ENCODE measurements at regions of chr7 and their contacts with region 1.

Region 1: GRCh38 chr7:80392229-80393169 is 119.4 kb downstream of the GNAT3 start:
- DNase-seq: peak in 2 of 14 experiments; percentile 8 to 10
- ATAC-seq: no peak
- H3K4me3 ChIP-seq: no peak overlapping the region
- H3K4me3 Mint-ChIP-seq: no peak overlapping the region
- H3K27ac ChIP-seq: no peak overlapping the region
- H3K27ac Mint-ChIP-seq: no peak overlapping the region
- H3K4me1 ChIP-seq: no peaks in the 10 kb centered on the region
- H3K4me1 Mint-ChIP-seq: no peaks in the 10 kb centered on the region
- H3K27me3 ChIP-seq: no peaks in the 10 kb centered on the region
- H3K27me3 Mint-ChIP-seq: no peaks in the 10 kb centered on the region
- CTCF ChIP-seq: peak; percentile 38

Region 2: GRCh38 chr7:79420464-79420863 is 972.0 kb before region 1 on chr7:
- CTCF ChIA-PET with region 1: no interaction called
- POLR2A ChIA-PET with region 1: no interaction called
- intact Hi-C with region 1: no loop called
- DNase-seq: no peak
- ATAC-seq: no peak
- H3K4me3 ChIP-seq: no peak overlapping the region
- H3K4me3 Mint-ChIP-seq: no peak overlapping the region
- H3K27ac ChIP-seq: no peak overlapping the region
- H3K27ac Mint-ChIP-seq: no peak overlapping the region
- H3K4me1 ChIP-seq: no peaks in the 10 kb centered on the region
- H3K4me1 Mint-ChIP-seq: no peaks in the 10 kb centered on the region
- H3K27me3 ChIP-seq: no peaks in the 10 kb centered on the region
- H3K27me3 Mint-ChIP-seq: no peaks in the 10 kb centered on the region
- CTCF ChIP-seq: no peak

Region 3: DNA sequence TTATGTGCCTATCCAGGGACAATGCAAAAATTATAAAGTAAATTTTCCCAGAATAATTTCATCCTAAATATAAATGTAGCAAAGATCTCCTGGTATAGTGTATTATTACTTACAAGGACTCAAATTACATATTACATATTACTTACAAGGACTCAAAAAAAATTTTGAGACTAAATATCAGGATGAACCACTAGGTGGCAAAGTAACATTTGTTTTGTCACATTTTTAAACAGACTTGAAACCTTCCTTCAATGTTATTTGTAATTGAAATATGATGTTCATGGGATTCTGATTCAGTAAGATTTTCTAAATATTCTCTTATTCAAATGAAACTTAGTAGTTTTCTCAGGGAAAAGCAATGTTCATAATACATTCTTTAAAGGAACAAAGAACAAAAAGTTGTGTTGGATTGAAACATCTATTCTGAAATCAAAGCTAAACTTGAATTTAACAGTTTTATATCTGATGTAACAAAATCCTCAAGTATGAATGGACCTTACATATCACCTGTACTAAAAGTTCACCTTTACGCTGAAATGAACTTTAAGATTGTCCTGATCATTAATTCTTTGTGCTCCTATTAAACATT is 332.2 kb before region 1 on chr7:
- CTCF ChIA-PET with region 1: no interaction called
- POLR2A ChIA-PET with region 1: no interaction called
- intact Hi-C with region 1: loop called in 1 of 2 experiments (anchors 2 kb)
- DNase-seq: peak in 2 of 14 experiments; percentile 20 to 22
- ATAC-seq: no peak
- H3K4me3 ChIP-seq: no peak overlapping the region
- H3K4me3 Mint-ChIP-seq: no peak overlapping the region
- H3K27ac ChIP-seq: no peak overlapping the region
- H3K27ac Mint-ChIP-seq: no peak overlapping the region
- H3K4me1 ChIP-seq: no peaks in the 10 kb centered on the region
- H3K4me1 Mint-ChIP-seq: no peaks in the 10 kb centered on the region
- H3K27me3 ChIP-seq: no peaks in the 10 kb centered on the region
- H3K27me3 Mint-ChIP-seq: no peaks in the 10 kb centered on the region
- CTCF ChIP-seq: peak; percentile 49

Region 4: GRCh38 chr7:80095545-80095944 is 297.0 kb before region 1 on chr7:
- CTCF ChIA-PET with region 1: no interaction called
- POLR2A ChIA-PET with region 1: no interaction called
- intact Hi-C with region 1: loop called (anchors 2 to 5 kb)
- DNase-seq: peak in 2 of 14 experiments; percentile 6
- ATAC-seq: no peak
- H3K4me3 ChIP-seq: no peak overlapping the region
- H3K4me3 Mint-ChIP-seq: no peak overlapping the region
- H3K27ac ChIP-seq: no peak overlapping the region
- H3K27ac Mint-ChIP-seq: no peak overlapping the region
- H3K4me1 ChIP-seq: no peaks in the 10 kb centered on the region
- H3K4me1 Mint-ChIP-seq: no peaks in the 10 kb centered on the region
- H3K27me3 ChIP-seq: no peaks in the 10 kb centered on the region
- H3K27me3 Mint-ChIP-seq: no peaks in the 10 kb centered on the region
- CTCF ChIP-seq: peak; percentile 31

Region 5: GRCh38 chr7:80134536-80135320 is 257.8 kb before region 1 on chr7 and contains the start of gene GNAI1:
- CTCF ChIA-PET with region 1: no interaction called
- POLR2A ChIA-PET with region 1: no interaction called
- intact Hi-C with region 1: loop called (anchors 2 to 10 kb)
- DNase-seq: peak in 6 of 14 experiments; percentile 3 to 39 (median 34)
- ATAC-seq: peak; percentile 45
- H3K4me3 ChIP-seq: peak within 1 kb of the TSS; percentile 56
- H3K4me3 Mint-ChIP-seq: peak within 1 kb of the TSS; percentile 92
- H3K27ac ChIP-seq: no peak within 1 kb of the TSS
- H3K27ac Mint-ChIP-seq: peak within 1 kb of the TSS; percentile 26
- H3K4me1 ChIP-seq: peaks cover 3% of the 10 kb centered on the region
- H3K4me1 Mint-ChIP-seq: peaks cover 29% of the 10 kb centered on the region
- H3K27me3 ChIP-seq: peaks cover 4 to 7% of the 10 kb centered on the region in 2 experiments
- H3K27me3 Mint-ChIP-seq: peaks cover 25% of the 10 kb centered on the region
- CTCF ChIP-seq: no peak
- total RNA-seq, gene GNAI1: 1.2 to 2.8 TPM

Measured in CD4-positive, alpha-beta T cell (primary cell).